B cell (primary cell): ENCODE measurements at regions of chr15 and their contacts with region 1.

Region 1: DNA sequence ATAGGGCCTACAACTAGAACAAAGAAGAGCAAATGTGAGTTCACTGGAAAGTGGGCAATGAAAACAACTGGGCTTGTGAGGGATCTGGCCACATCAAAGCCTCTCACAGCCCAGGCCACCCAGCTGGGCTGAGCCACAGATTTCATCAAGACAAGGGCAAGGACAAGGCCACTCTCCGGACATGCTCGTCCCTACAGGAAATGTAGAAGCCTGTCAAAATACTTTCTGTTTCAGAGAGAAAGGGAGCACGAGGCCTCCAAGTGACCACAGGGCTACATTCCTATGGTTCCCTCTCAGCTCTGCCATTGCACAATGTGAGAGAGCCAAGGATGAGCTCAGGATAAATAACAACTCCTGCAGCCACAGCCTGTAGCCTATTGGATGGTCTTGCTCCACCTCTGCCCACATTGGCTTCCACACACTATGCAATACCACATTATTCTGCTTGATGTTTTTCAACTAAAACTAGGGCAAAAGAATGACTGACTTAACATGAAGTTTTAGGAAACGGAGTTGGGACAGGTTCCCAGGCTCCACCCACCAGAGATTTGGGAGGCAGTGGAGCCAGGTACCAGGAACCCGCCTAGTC is 12.1 kb downstream of the TBC1D2B start:
- DNase-seq: no peak
- ATAC-seq: no peak
- H3K4me3 ChIP-seq: no peak overlapping the region
- H3K4me3 Mint-ChIP-seq: peak overlapping the region; percentile 52
- H3K27ac ChIP-seq: no peak overlapping the region
- H3K27ac Mint-ChIP-seq: no peak overlapping the region
- H3K4me1 ChIP-seq: peaks cover 61 to 70% of the 10 kb centered on the region in 2 donors
- H3K4me1 Mint-ChIP-seq: peaks cover 12% of the 10 kb centered on the region
- H3K27me3 ChIP-seq: peaks cover 0 to 8% (median 0%) of the 10 kb centered on the region in 4 experiments
- H3K27me3 Mint-ChIP-seq: no peaks in the 10 kb centered on the region
- CTCF ChIP-seq: no peak

Region 2: DNA sequence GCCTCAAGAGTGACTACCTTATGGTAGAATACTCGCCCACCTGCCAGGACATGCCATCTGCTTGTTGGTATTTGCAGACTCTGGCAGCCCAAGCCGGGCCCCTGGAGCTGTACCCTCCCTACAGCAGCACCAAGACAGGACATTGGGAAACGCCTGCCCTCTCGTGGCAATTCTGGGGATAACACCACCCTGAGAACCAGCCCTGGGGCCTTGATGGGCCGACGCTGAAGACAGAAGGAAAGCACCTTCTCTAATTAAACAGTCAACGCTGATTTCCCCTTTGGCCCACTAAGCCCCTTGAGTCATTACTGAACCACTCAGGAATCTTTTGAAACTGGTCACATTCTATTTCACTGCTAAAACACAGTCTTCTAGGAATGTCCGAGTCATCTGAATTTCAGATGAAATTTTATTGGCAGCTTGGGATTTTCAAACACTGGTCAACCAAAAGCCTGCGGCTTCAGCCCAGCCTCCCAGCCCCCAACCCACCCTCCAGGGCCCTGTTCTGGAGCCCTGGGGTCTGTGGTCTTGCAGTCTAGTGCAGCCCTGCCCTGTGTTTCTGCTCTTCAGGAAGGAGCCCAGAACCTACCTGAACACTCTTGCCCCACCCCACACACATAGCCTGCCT is 1914.3 kb before region 1 on chr15:
- CTCF ChIA-PET with region 1: no interaction called
- POLR2A ChIA-PET with region 1: no interaction called
- intact Hi-C with region 1: no loop called
- DNase-seq: peak; percentile 84
- ATAC-seq: peak; percentile 96
- H3K4me3 ChIP-seq: no peak overlapping the region
- H3K4me3 Mint-ChIP-seq: no peak overlapping the region
- H3K27ac ChIP-seq: no peak overlapping the region
- H3K27ac Mint-ChIP-seq: peak overlapping the region; percentile 26
- H3K4me1 ChIP-seq: peaks cover 11 to 16% of the 10 kb centered on the region in 2 donors
- H3K4me1 Mint-ChIP-seq: peaks cover 14% of the 10 kb centered on the region
- H3K27me3 ChIP-seq: peaks cover 0 to 9% (median 4%) of the 10 kb centered on the region in 4 experiments
- H3K27me3 Mint-ChIP-seq: peaks cover 8% of the 10 kb centered on the region
- CTCF ChIP-seq: peak; percentile 95

Region 3: DNA sequence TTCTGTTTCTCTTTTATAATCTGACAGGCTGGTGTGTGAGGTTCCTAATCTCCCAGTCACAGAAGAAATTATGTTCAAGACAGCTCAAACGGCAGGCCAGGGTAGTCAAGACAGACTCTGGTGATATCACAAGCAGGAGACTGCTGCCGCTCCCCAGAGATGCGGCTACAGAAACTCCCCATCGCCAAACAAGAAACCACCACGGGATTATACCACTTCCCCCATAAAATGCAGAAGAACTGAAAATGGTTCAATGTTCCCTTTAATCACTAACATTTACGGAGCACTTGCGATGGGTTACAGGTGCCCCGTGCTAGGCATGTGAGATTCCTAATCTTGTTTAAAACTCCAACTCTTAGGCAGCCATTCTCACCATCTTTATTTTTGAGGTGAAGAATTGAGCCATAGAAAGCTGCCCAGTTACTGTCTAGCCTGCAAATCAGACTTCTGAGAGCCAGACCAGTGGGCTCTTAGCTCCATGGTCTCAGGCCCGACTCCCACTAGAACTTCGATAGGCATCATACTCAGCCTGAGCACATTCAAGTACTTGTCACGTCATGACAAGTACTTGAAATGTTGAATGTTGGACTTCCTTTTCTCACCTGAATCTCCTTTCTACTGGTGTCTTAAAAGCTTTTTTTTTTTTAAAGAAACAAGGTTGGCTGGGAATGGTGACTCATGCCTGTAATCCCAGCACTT is 46.3 kb before region 1 on chr15:
- CTCF ChIA-PET with region 1: no interaction called
- POLR2A ChIA-PET with region 1: no interaction called
- intact Hi-C with region 1: loop called (anchors 5 kb)
- DNase-seq: peak; percentile 67
- ATAC-seq: peak; percentile 93
- H3K4me3 ChIP-seq: no peak overlapping the region
- H3K4me3 Mint-ChIP-seq: peak overlapping the region; percentile 38
- H3K27ac ChIP-seq: peak overlapping the region in 1 of 2 donors; percentile 31
- H3K27ac Mint-ChIP-seq: peak overlapping the region; percentile 44
- H3K4me1 ChIP-seq: peaks cover 10 to 11% of the 10 kb centered on the region in 2 donors
- H3K4me1 Mint-ChIP-seq: peaks cover 12% of the 10 kb centered on the region
- H3K27me3 ChIP-seq: no peaks in the 10 kb centered on the region
- H3K27me3 Mint-ChIP-seq: no peaks in the 10 kb centered on the region
- CTCF ChIP-seq: no peak

Region 4: GRCh38 chr15:78034495-78035191 is 30.7 kb before region 1 on chr15:
- CTCF ChIA-PET with region 1: interaction called, 5 read pairs
- POLR2A ChIA-PET with region 1: interaction called, 3 read pairs
- intact Hi-C with region 1: loop called (anchors 5 kb)
- DNase-seq: peak; percentile 51
- ATAC-seq: peak; percentile 74
- H3K4me3 ChIP-seq: no peak overlapping the region
- H3K4me3 Mint-ChIP-seq: peak overlapping the region; percentile 67
- H3K27ac ChIP-seq: peak overlapping the region; percentile 9 to 13
- H3K27ac Mint-ChIP-seq: peak overlapping the region; percentile 72
- H3K4me1 ChIP-seq: peaks cover 32 to 42% of the 10 kb centered on the region in 2 donors
- H3K4me1 Mint-ChIP-seq: peaks cover 57% of the 10 kb centered on the region
- H3K27me3 ChIP-seq: no peaks in the 10 kb centered on the region
- H3K27me3 Mint-ChIP-seq: no peaks in the 10 kb centered on the region
- CTCF ChIP-seq: no peak